Heart left ventricle (tissue), 16 donors: ENCODE measurements at regions of chr1 and their contacts with region 1.

Region 1: DNA sequence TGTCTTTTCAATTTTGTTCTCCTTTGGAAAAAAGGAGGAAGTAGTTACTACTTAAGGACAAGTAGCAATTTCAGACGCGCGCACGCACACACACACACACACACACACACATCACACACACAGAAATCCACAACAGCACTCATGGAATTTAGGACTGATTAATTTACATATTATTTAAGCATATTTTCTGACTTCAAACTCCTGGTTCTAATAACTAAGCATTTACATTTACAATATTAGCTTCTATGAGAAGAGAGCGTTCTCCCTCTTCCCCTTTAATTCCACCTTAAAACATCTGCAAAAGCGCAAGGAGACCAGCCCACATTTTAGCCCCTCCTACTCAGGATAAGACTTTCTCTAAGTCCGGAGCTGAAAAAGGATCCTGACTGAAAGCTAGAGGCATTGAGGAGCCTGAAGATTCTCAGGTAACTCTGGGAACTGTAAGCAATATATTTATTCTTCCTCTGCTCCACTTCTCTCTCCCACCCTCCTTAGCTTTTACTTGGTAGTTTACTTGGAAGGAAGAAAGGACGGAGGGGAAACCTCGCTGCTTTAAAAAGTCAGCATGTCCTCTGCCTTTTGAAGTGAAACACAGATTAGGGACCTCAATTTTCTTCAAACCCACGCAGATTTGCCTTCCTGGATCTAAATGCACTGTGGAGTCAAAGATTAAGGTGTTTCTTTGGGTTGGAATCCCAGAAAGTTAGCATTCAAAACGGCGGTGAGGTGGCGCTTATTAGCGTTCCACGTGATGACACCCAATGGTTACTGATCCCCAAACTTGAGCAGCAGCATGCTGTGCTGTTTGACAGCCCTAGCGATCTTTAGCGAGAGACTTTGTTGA is at the start of gene PLA2G4A:
- DNase-seq: peak in 4 of 5 donors; percentile 26 to 43 (median 30)
- ATAC-seq: peak; percentile 64 to 94 (median 88)
- H3K4me3 ChIP-seq: peak within 1 kb of the TSS; percentile 1 to 71 (median 56)
- H3K27ac ChIP-seq: peak within 1 kb of the TSS in 10 of 12 donors; percentile 15 to 85 (median 60)
- H3K4me1 ChIP-seq: peaks cover 0 to 3% (median 0%) of the 10 kb centered on the region in 12 donors
- H3K27me3 ChIP-seq: no peaks in the 10 kb centered on the region
- CTCF ChIP-seq: no peak
- POLR2A ChIP-seq: no peak
- total RNA-seq, gene PLA2G4A: 1.00 to 5.8 (median 1.9) TPM

Region 2: GRCh38 chr1:186165303-186165702 is 663.5 kb before region 1 on chr1:
- intact Hi-C with region 1: no loop called
- DNase-seq: no peak
- ATAC-seq: no peak
- H3K4me3 ChIP-seq: no peak overlapping the region
- H3K27ac ChIP-seq: no peak overlapping the region
- H3K4me1 ChIP-seq: no peaks in the 10 kb centered on the region
- H3K27me3 ChIP-seq: no peaks in the 10 kb centered on the region
- CTCF ChIP-seq: no peak
- POLR2A ChIP-seq: no peak

Region 3: DNA sequence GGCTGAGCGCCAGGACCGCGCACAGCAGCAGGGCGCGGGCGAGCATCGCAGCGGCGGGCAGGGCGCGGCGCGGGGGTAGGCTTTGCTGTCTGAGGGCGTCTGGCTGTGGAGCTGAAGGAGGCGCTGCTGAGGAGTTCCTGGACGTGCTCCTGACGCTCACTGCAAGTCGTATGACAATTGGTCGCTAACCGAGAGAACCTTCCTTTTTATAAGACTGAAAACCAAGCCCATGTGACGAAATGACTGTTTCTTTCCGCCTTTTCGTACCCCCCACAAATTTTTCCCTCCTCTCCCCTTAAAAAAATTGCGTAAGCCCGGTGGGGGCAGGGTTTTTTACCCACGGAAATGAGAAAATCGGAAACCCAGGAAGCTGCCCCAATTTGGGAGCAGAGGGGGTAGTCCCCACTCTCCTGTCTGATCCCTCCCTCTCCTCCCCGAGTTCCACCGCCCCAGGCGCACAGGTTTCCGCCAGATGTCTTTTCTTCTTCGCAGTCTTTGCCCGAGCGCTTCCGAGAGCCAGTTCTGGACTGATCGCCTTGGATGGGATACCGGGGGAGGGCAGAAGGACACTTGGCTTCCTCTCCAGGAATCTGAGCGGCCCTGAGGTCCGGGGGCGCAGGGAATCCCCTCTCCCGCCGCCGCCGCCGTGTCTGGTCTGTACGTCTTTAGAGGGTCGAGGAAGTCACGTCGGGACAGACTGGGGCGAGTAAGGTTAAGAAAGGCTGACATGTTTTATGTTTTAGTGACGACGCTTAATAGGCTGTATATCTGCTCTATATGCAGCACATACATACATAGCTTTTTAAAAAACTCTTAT is 148.4 kb before region 1 on chr1 and contains the start of gene PTGS2:
- intact Hi-C with region 1: no loop called
- DNase-seq: peak; percentile 70 to 82 (median 76)
- ATAC-seq: peak; percentile 93 to 97 (median 96)
- H3K4me3 ChIP-seq: peak within 1 kb of the TSS; percentile 9 to 76 (median 58)
- H3K27ac ChIP-seq: peak within 1 kb of the TSS; percentile 16 to 94 (median 66)
- H3K4me1 ChIP-seq: peaks cover 0 to 7% (median 0%) of the 10 kb centered on the region in 12 donors
- H3K27me3 ChIP-seq: peaks cover 0 to 19% (median 0%) of the 10 kb centered on the region in 9 donors
- CTCF ChIP-seq: peak in 10 of 12 donors; percentile 11 to 59 (median 30)
- POLR2A ChIP-seq: peak in 1 of 2 donors; percentile 52
- total RNA-seq, gene PTGS2: 0.22 to 4.2 (median 0.72) TPM

Region 4: GRCh38 chr1:186763107-186763506 is 65.7 kb before region 1 on chr1:
- intact Hi-C with region 1: no loop called
- DNase-seq: no peak
- ATAC-seq: peak in 1 of 4 donors; percentile 37
- H3K4me3 ChIP-seq: no peak overlapping the region
- H3K27ac ChIP-seq: no peak overlapping the region
- H3K4me1 ChIP-seq: no peaks in the 10 kb centered on the region
- H3K27me3 ChIP-seq: no peaks in the 10 kb centered on the region
- CTCF ChIP-seq: no peak
- POLR2A ChIP-seq: no peak

Region 5: DNA sequence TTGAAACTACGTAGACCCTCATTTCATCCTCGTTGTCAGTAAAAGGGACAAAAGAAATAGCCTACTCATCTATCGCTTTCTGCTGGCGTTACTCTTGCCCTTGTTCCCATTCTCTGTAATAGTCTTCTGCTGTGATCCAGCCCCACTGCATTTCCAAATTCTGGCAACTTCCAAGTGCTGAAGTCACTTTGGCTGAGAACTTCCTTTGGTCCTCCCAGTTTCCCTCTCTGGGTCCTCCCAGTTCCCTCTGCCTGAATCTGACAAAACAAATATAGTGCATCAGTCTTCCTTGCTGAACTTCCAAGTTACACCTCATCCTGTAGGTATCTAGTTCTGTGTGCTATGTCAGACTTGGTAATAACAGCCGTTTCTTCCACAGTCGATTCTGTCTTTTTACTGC is 47.1 kb before region 1 on chr1:
- intact Hi-C with region 1: loop called in 1 of 10 experiments (anchors 5 kb)
- DNase-seq: peak in 2 of 5 donors; percentile 8 to 27
- ATAC-seq: peak; percentile 42 to 75 (median 61)
- H3K4me3 ChIP-seq: no peak overlapping the region
- H3K27ac ChIP-seq: no peak overlapping the region
- H3K4me1 ChIP-seq: no peaks in the 10 kb centered on the region
- H3K27me3 ChIP-seq: no peaks in the 10 kb centered on the region
- CTCF ChIP-seq: no peak
- POLR2A ChIP-seq: no peak